ENCODE measurements at regions of chr7 and their contacts with region 1.

Region 1: GRCh38 chr7:27095897-27096767 is at the start of gene HOXA1:
- DNase-seq: peak; percentile 82
- H3K4me3 Mint-ChIP-seq: peak within 1 kb of the TSS; percentile 80
- H3K27ac Mint-ChIP-seq: peak within 1 kb of the TSS; percentile 47
- H3K4me1 Mint-ChIP-seq: peaks cover 21% of the 10 kb centered on the region
- H3K27me3 Mint-ChIP-seq: peaks cover 82% of the 10 kb centered on the region
- total RNA-seq, gene HOXA1: 0.24 to 0.30 TPM

Region 2: DNA sequence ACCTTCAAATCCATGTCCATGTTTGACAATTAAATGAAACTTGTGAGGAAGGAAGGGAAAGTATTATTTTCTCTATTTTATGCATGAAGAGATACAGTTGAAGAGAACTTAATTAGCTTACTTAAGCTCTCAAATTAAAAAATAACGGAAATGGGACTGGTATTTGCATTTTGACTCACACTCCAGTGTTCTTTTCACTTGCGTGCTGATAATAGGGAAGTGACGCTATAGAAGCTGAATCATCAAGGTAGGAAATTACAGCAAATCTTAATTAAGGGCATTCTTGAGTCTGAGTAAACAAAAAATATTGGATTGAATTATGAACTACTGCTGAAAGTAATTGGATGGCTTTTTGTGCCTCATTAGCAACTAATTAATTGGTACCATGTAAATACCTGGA is 1823.9 kb before region 1 on chr7:
- CTCF ChIA-PET with region 1: no interaction called
- intact Hi-C with region 1: no loop called
- DNase-seq: no peak
- H3K4me3 Mint-ChIP-seq: no peak overlapping the region
- H3K27ac Mint-ChIP-seq: no peak overlapping the region
- H3K4me1 Mint-ChIP-seq: no peaks in the 10 kb centered on the region
- H3K27me3 Mint-ChIP-seq: no peaks in the 10 kb centered on the region

Region 3: DNA sequence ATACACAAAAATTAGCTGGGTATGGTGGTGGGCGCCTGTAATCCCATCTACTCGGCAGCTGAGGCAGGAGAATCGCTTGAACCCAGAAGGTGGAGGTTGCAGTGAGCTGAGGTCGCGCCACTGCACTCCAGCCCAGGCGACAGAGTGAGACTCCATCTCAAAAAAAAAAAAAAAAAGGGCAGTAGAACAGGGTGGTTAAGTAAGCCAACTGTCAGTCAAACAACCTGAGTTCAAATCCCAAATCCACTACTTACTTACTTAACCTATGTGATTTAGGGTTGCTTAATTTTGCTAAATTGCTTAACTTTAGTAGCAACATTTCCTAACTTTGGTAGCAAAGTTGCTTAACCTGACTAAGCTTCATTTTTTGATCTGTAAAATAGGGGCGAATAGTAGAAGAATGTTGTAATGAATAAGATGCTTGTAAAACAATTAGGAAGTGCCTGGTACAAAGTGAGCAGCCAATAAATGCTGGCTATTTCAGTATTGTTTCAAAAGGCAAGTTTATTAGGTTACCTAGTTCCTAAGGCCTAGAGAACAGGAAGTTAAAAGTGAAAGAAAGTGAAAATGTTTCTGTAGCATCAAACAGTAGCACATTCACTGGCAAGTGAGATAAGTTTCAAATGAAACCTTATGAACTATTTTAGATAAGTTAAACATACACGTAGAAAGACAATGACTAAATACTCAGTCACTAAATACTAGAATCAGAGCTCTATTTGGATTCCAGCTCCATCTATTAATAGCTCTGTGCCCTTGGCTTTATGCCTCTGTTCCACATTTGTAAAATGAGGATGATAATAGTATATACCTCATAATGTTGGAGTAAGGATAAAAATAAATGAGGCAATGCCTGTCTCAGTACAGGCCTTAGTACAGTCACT is 64.6 kb before region 1 on chr7:
- CTCF ChIA-PET with region 1: no interaction called
- intact Hi-C with region 1: loop called (anchors 1 kb)
- DNase-seq: no peak
- H3K4me3 Mint-ChIP-seq: no peak overlapping the region
- H3K27ac Mint-ChIP-seq: peak overlapping the region; percentile 61
- H3K4me1 Mint-ChIP-seq: peaks cover 26% of the 10 kb centered on the region
- H3K27me3 Mint-ChIP-seq: no peaks in the 10 kb centered on the region

Region 4: DNA sequence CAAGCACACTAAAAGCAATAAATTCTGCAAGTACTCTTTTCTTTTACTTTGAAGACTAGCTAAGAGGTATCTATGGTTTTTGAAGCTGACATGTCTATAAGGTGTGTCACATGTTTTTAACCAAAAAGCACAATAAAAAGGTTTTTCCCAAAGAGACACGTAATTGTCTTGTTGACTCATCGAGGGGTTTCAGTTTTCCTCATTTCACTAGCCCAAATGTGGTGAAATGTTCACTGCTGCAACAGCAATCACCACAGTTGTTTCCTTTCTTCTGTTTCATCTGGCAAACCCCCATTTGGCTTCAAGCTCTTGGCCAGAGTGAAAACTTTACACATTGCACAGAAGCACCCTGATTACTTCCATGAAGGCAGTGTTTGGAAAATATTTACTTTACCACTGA is 38.3 kb after region 1 on chr7:
- CTCF ChIA-PET with region 1: no interaction called
- intact Hi-C with region 1: loop called (anchors 1 kb)
- DNase-seq: peak; percentile 64
- H3K4me3 Mint-ChIP-seq: no peak overlapping the region
- H3K27ac Mint-ChIP-seq: peak overlapping the region; percentile 51
- H3K4me1 Mint-ChIP-seq: peaks cover 19% of the 10 kb centered on the region
- H3K27me3 Mint-ChIP-seq: peaks cover 54% of the 10 kb centered on the region

Region 5: DNA sequence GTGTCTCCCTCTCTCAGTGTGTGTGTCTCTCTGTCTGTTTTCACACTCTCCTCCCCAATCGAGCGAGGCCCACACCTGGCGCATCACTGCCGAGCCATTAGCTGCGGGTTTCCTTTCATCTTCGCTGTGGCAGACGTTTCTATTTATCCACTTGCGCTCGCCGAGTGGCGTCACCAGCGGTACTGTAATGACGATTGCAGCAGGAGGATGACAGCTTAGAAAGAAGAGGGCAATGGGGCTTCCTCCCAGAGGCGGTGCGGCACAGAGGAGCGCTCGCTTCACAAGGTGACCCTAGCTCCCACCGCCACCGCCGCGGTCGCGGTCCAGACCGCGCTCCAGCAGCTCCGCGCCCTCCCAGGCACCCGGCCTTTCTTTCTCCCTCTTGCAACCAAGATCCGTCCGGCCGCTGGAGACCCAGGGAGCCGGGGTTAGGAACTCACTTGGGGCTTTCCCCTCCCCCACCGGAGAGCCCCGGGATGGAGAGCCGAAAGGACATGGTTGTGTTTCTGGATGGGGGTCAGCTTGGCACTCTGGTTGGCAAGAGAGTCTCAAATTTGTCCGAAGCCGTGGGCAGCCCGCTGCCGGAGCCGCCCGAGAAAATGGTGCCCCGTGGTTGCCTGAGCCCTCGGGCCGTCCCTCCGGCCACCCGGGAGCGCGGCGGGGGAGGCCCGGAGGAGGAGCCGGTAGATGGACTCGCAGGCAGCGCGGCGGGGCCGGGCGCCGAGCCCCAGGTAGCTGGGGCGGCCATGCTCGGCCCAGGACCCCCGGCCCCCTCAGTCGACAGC is 146.6 kb after region 1 on chr7 and contains the start of gene EVX1:
- CTCF ChIA-PET with region 1: no interaction called
- intact Hi-C with region 1: loop called (anchors 10 kb)
- DNase-seq: peak; percentile 78
- H3K4me3 Mint-ChIP-seq: peak within 1 kb of the TSS; percentile 58
- H3K27ac Mint-ChIP-seq: no peak within 1 kb of the TSS
- H3K4me1 Mint-ChIP-seq: peaks cover 25% of the 10 kb centered on the region
- H3K27me3 Mint-ChIP-seq: peaks cover 79% of the 10 kb centered on the region
- total RNA-seq, gene EVX1: not detected

Measured in activated naive CD4-positive, alpha-beta T cell treated with anti-CD3 and anti-CD28 coated beads for 36 hours (primary cell).